Heart left ventricle (tissue), 16 donors: ENCODE measurements at regions of chr7 and their contacts with region 1.

Region 1: DNA sequence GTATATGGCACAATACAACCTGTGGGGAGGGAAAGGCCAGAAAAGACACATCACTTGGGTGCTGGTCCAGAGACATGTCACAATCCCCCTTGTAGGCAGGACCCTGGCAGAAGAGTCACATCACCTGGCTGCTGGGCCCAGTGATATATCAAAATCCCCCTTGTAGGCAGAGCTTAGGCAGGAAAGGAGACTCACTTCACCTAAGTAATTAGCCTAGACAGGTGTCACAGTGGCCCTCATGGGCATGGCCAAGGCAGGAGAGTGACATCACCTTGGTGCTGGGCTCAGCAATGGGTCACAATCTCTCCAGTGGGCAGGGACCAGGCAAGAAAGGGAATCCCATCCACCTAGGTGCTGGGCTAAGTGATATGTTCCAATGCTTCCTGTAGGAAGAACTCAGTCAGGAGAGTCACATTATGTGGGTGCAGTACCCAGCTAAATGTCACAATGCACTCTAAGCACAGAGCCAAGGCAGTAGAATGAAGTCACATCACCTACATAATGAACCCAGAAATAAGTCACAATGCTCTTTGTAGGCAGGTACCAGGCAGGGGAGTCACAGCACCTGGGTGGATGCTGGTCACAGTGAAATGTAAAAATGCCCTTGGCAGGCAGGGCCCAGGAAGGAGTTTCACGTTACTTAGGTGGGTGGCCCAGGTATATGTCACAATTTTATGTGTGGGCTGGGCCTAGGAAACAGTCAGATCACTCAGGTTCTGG is 18.9 kb upstream of the ZNF736 start:
- DNase-seq: no peak
- ATAC-seq: no peak
- H3K4me3 ChIP-seq: no peak overlapping the region
- H3K27ac ChIP-seq: no peak overlapping the region
- H3K4me1 ChIP-seq: no peaks in the 10 kb centered on the region
- H3K27me3 ChIP-seq: no peaks in the 10 kb centered on the region
- CTCF ChIP-seq: no peak
- POLR2A ChIP-seq: no peak

Region 2: DNA sequence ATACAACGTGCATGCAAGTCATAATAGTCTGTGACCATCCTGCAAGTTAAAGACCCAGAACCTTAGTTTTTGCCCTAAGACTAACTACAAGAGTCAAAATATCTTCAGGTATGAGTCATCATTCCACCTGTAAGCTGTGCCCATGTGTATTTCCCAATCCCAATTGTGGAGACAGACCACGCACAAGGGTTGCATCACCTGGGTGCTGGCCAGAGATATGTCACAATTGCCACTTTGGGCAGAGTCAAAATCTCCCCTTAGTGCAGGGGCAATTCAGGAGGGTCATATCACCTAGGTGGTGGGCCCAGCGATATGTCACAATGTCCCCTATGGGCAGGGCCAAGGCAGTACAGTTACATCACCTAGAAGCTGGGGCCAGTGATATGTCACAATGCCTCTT is 53.7 kb before region 1 on chr7:
- intact Hi-C with region 1: loop called in 1 of 10 experiments (anchors 10 kb)
- DNase-seq: no peak
- ATAC-seq: no peak
- H3K4me3 ChIP-seq: no peak overlapping the region
- H3K27ac ChIP-seq: no peak overlapping the region
- H3K4me1 ChIP-seq: no peaks in the 10 kb centered on the region
- H3K27me3 ChIP-seq: no peaks in the 10 kb centered on the region
- CTCF ChIP-seq: no peak
- POLR2A ChIP-seq: no peak